ENCODE measurements at regions of chr17 and their contacts with region 1.

Region 1: DNA sequence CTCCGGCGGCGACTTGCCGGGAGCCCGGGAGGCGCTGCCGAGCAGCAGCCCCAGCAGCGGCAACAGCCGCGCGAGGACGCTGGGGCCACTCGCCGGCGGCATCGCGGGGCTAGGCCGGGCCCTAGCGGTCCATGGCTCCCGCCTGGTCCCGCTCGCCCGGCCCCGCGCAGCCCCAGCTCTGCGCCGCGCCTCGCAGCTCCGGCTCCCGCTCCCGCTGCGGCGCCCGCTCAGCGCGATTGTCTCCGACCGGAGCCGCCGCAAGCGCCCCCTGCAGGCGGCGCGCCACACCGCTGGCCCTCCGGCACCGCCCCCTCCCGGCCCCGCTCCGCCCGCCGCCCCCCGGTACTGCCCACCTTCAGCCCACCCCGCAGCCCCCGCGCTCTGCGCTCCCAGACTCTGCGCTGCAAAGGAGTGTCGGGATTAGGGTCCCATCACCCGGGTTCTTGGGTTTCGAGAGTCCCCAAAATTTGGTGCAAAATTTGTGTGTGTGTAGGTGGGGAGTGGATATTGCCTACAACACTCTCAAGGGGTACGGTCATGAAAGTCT is at the start of gene FAM171A2:
- DNase-seq: no peak
- H3K4me3 ChIP-seq: peak within 1 kb of the TSS; percentile 74
- H3K27me3 ChIP-seq: peaks cover 5% of the 10 kb centered on the region
- CTCF ChIP-seq: peak; percentile 22; the same call in 1 of the 2 replicates
- polyA plus RNA-seq, gene FAM171A2: 1.3 and 2.3 TPM in 2 replicates

Region 2: GRCh38 chr17:44247440-44247841 is 116.2 kb before region 1 on chr17:
- CTCF ChIA-PET with region 1: no interaction called
- POLR2A ChIA-PET with region 1: no interaction called
- DNase-seq: no peak
- H3K4me3 ChIP-seq: no peak overlapping the region
- H3K27me3 ChIP-seq: no peaks in the 10 kb centered on the region
- CTCF ChIP-seq: no peak

Region 3: DNA sequence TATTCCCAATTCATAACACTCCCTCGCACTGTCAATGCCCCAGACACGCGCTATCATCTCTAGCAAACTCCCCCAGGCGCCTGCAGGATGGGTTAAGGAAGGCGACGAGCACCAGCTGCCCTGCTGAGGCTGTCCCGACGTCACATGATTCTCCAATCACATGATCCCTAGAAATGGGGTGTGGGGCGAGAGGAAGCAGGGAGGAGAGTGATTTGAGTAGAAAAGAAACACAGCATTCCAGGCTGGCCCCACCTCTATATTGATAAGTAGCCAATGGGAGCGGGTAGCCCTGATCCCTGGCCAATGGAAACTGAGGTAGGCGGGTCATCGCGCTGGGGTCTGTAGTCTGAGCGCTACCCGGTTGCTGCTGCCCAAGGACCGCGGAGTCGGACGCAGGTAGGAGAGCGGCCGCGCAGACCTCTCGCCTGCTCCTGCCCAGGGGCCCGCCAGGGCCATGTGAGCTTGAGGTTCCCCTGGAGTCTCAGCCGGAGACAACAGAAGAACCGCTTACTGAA is 18.7 kb before region 1 on chr17 and contains the start of gene GRN:
- CTCF ChIA-PET with region 1: interaction called, 69 read pairs
- POLR2A ChIA-PET with region 1: no interaction called
- DNase-seq: peak; percentile 96
- H3K4me3 ChIP-seq: peak within 1 kb of the TSS; percentile 87
- H3K27me3 ChIP-seq: no peaks in the 10 kb centered on the region
- CTCF ChIP-seq: no peak
- polyA plus RNA-seq, gene GRN: 213 and 581 TPM in 2 replicates

Region 4: DNA sequence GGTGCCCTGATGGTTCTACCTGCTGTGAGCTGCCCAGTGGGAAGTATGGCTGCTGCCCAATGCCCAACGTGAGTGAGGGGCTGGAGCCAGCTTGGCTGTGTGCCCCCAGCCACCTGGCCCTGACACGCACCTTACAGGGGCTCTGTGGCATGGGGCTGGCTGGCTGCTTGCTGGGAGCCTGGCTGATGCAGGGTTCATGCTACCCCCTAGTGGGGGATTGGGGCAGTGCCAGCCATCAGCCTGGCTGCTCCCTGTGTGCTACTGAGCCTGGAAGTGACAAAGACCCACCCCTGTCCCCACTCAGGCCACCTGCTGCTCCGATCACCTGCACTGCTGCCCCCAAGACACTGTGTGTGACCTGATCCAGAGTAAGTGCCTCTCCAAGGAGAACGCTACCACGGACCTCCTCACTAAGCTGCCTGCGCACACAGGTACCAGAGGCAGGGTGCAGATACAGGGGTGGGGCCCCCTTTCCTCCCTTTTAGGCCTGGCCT is 12.9 kb before region 1 on chr17:
- CTCF ChIA-PET with region 1: interaction called, 69 read pairs
- POLR2A ChIA-PET with region 1: no interaction called
- DNase-seq: no peak
- H3K4me3 ChIP-seq: no peak overlapping the region
- H3K27me3 ChIP-seq: no peaks in the 10 kb centered on the region
- CTCF ChIP-seq: peak; percentile 85

Region 5: GRCh38 chr17:44376124-44376523 is 12.4 kb after region 1 on chr17:
- CTCF ChIA-PET with region 1: interaction called, 19 read pairs
- POLR2A ChIA-PET with region 1: no interaction called
- DNase-seq: no peak
- H3K4me3 ChIP-seq: no peak overlapping the region
- H3K27me3 ChIP-seq: no peaks in the 10 kb centered on the region
- CTCF ChIP-seq: peak; percentile 50